ENCODE measurements at regions of chr3 and their contacts with region 1.

Region 1: DNA sequence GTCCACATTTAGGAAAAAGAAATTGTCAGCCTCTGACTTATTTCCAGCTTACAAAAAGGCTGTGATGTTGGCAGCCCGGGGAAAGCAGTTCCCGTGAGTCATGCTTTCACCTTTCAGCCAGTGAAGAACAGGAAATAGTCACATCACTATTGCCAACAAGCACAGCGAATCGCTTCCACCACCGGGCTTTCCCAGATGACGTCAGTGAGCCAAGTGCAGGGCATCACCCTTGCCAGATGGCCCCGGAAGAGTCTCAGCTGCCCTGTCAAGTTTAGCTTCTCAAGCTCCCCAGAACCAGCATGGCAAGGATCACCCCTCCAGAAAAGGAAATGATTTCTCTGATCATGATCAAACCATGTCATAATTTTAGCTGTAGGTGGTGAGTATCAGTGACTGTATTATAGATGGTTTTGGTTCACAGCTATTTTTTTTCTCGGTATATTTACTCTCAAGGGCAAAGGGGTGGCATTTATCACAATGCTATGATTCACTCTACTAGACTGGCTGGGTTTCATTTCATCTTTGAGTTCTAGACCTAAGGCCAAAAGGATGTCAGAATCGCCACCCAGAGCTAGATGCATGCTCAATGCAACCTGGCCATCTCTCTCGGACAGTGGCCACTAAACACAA is 32.9 kb downstream of the B3GNT5 start:
- DNase-seq: peak; percentile 98
- H3K4me3 Mint-ChIP-seq: peak overlapping the region; percentile 67
- H3K27ac Mint-ChIP-seq: peak overlapping the region; percentile 97
- H3K4me1 Mint-ChIP-seq: peaks cover 40% of the 10 kb centered on the region
- H3K27me3 Mint-ChIP-seq: no peaks in the 10 kb centered on the region

Region 2: DNA sequence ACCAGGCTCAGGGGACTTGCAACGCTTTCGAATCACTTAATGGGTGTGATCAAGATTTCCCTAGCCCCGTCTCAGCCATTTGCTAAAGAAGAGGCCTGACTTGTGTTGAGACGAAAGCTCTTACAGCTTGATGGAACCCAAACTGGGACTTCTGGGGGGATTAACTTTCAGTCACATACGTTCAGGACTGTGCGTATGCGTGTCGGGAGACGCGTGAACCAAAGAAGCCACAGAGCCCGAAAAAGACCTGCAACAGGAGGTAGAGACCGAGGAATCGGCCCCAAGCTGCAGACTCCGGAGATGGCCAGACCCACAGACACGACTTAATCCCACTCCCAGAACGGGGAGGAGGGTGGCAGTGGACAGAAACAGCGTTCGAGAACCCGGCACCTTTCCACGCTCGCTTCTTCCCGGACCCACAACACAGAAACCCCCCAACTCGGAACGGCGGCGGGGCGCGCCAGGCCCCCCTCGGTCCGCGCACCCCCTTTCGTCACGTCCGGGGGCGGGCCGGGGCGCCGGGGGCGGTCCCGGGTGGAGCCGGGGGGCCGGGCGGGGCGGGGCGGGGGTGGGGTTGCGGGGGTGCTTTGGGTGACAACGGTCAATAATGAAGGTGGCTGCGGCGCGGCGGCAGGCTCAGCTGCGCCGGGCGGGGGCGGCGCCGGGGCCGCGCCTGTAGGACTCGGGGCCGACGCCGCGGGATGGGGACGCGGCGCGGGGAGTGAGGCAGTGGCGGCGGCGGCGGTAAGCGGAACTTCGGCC is 492.9 kb before region 1 on chr3 and contains the start of gene ATP11B:
- CTCF ChIA-PET with region 1: no interaction called
- intact Hi-C with region 1: loop called (anchors 2 kb)
- DNase-seq: peak; percentile 70
- H3K4me3 Mint-ChIP-seq: peak within 1 kb of the TSS; percentile 99
- H3K27ac Mint-ChIP-seq: peak within 1 kb of the TSS; percentile 97
- H3K4me1 Mint-ChIP-seq: peaks cover 25% of the 10 kb centered on the region
- H3K27me3 Mint-ChIP-seq: no peaks in the 10 kb centered on the region
- total RNA-seq, gene ATP11B: 86.6 to 92.3 TPM

Region 3: GRCh38 chr3:183158551-183159006 is 127.4 kb before region 1 on chr3:
- CTCF ChIA-PET with region 1: no interaction called
- intact Hi-C with region 1: loop called (anchors 1 kb)
- DNase-seq: peak; percentile 80
- H3K4me3 Mint-ChIP-seq: peak overlapping the region; percentile 19
- H3K27ac Mint-ChIP-seq: peak overlapping the region; percentile 74
- H3K4me1 Mint-ChIP-seq: peaks cover 41% of the 10 kb centered on the region
- H3K27me3 Mint-ChIP-seq: no peaks in the 10 kb centered on the region

Region 4: GRCh38 chr3:183252973-183253901 is 32.7 kb before region 1 on chr3 and contains the start of gene B3GNT5:
- CTCF ChIA-PET with region 1: interaction called, 4 read pairs
- intact Hi-C with region 1: loop called (anchors 1 kb)
- DNase-seq: peak; percentile 67
- H3K4me3 Mint-ChIP-seq: peak within 1 kb of the TSS; percentile 76
- H3K27ac Mint-ChIP-seq: peak within 1 kb of the TSS; percentile 75
- H3K4me1 Mint-ChIP-seq: peaks cover 29% of the 10 kb centered on the region
- H3K27me3 Mint-ChIP-seq: peaks cover 2% of the 10 kb centered on the region
- total RNA-seq, gene B3GNT5: 15.0 to 18.8 TPM

Region 5: DNA sequence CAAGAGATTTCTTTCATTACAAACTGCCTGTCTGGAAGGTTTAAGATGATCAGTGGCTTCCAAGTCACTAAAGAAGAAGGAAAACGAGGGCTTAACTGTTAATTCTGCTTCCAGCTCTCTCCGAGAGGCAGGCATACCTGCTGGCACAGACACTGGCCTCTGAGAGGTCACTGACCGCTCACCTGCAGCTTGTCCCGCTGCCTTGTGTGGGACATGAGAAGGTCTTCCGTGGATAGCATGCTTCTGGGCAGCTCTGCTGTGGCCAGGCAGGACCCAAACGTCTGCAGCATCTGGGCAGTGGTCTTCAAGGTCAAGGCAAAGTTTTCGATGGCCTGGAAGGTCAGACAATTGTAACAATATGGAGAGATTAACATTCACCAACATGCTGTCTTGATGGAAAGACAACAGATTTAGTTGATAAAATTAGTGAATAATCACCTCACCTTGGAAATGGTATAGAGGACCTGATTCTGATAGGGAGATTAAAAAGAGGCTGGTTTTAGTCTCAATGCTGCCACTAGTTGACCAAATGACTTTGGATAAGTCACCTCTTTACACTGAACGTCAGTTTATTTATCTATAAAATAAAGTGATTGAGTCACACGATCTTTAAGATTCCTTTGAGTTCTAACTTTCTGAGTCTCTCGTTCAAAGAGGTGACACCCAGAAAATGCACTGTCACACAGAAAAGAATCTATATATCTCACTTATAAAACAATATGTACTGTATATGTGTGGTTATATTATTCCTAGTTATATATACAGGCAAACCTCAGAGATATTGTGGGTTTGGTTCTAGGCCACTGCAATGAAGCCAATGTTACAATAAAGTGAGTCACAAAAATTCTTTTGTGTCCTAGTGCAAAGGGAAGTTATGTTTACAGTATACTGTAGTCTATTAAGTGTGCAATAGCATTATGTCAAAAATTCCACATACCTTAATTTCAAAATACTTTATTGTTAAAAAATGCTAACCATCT is 32.2 kb after region 1 on chr3:
- CTCF ChIA-PET with region 1: interaction called, 4 read pairs
- intact Hi-C with region 1: loop called (anchors 1 kb)
- DNase-seq: no peak
- H3K4me3 Mint-ChIP-seq: no peak overlapping the region
- H3K27ac Mint-ChIP-seq: no peak overlapping the region
- H3K4me1 Mint-ChIP-seq: peaks cover 16% of the 10 kb centered on the region
- H3K27me3 Mint-ChIP-seq: peaks cover 3% of the 10 kb centered on the region

Region 6: GRCh38 chr3:183369117-183369516 is 83.2 kb after region 1 on chr3:
- CTCF ChIA-PET with region 1: interaction called, 3 read pairs
- intact Hi-C with region 1: loop called (anchors 1 kb)
- DNase-seq: no peak
- H3K4me3 Mint-ChIP-seq: no peak overlapping the region
- H3K27ac Mint-ChIP-seq: no peak overlapping the region
- H3K4me1 Mint-ChIP-seq: peaks cover 36% of the 10 kb centered on the region
- H3K27me3 Mint-ChIP-seq: no peaks in the 10 kb centered on the region

Region 7: DNA sequence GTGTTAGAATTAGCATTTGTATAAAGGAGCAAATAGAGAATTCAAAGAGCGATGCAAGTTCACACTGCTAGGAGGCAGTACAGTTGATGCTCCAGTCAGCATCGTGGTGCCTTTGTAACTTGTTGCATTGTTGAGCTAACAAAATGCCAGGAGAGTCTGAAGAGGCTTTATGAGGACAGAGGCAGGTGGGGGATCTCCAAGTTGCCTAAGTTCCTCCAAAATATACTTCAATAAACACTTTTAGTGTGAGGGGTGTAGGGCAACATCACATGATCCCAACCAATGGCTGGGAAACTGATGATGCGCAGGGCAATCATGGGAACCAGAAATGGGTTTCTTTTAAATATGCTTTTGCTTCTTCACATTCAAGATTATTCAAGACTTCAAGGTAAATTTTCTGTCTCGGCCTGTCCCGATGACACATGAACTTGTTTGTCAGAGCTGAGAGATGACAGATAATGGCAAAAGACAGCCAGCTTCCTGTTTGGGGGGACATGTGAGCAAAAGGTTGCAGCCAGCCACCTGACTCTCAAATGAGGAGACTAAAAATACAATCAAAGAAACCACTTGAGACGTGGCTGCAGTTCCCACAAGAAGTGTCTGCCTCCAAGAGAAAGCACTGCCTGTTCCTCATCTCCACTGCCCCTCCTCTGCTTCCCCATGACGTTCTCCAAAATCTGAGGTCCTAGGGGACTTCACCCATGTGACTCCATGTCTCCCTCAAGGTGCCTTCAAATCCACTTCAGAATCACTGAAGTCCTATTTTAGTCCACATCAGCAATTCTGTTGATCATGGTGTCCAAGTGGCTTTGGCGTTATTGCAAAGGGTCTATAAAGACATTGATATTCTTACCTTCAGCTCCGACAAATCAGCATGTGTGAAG is 230.3 kb after region 1 on chr3:
- CTCF ChIA-PET with region 1: no interaction called
- intact Hi-C with region 1: loop called (anchors 2 kb)
- DNase-seq: peak; percentile 80
- H3K4me3 Mint-ChIP-seq: peak overlapping the region; percentile 17
- H3K27ac Mint-ChIP-seq: peak overlapping the region; percentile 90
- H3K4me1 Mint-ChIP-seq: peaks cover 81% of the 10 kb centered on the region
- H3K27me3 Mint-ChIP-seq: no peaks in the 10 kb centered on the region